Vagina (tissue), 2 donors: ENCODE measurements at regions of chr1 and their contacts with region 1.

Region 1: GRCh38 chr1:157090196-157090647 is 9.4 kb downstream of the ETV3L start:
- DNase-seq: no peak
- H3K4me3 ChIP-seq: no peak overlapping the region
- H3K27ac ChIP-seq: no peak overlapping the region
- H3K4me1 ChIP-seq: peaks cover 14% of the 10 kb centered on the region
- H3K27me3 ChIP-seq: no peaks in the 10 kb centered on the region
- CTCF ChIP-seq: peak; percentile 85 to 93 (median 87)
- POLR2A ChIP-seq: no peak

Region 2: DNA sequence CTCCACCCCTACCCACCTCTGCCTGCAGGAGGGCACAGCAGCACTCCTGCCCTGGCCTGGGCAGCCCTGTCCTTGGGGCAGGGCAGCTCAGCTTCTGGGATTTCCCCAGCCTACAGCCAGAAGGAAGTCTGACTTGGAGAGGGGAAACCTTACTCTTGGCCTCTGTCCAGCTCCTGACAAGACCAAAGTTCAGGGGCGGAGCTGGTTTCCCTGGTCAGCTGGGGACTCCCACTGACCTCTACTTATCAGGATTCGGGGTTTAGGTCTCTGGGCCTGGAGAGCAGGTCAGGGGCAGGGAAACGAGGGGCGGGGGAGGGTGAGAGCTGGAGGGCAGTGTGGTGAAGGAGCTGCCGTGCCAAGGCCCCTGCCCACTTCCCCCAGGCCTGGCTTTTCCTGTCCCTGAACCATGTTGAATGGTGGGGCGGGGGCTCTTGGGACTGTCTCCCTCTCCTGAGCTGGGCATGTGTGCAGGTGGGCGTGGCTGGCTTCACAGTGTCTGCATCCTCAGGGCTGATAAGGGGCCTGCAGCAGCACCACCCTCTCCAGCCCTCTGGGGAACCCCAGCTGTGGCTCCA is 64.8 kb after region 1 on chr1:
- intact Hi-C with region 1: loop called (anchors 2 kb)
- DNase-seq: no peak
- H3K4me3 ChIP-seq: no peak overlapping the region
- H3K27ac ChIP-seq: peak overlapping the region; percentile 28
- H3K4me1 ChIP-seq: peaks cover 26% of the 10 kb centered on the region
- H3K27me3 ChIP-seq: no peaks in the 10 kb centered on the region
- CTCF ChIP-seq: no peak
- POLR2A ChIP-seq: no peak

Region 3: DNA sequence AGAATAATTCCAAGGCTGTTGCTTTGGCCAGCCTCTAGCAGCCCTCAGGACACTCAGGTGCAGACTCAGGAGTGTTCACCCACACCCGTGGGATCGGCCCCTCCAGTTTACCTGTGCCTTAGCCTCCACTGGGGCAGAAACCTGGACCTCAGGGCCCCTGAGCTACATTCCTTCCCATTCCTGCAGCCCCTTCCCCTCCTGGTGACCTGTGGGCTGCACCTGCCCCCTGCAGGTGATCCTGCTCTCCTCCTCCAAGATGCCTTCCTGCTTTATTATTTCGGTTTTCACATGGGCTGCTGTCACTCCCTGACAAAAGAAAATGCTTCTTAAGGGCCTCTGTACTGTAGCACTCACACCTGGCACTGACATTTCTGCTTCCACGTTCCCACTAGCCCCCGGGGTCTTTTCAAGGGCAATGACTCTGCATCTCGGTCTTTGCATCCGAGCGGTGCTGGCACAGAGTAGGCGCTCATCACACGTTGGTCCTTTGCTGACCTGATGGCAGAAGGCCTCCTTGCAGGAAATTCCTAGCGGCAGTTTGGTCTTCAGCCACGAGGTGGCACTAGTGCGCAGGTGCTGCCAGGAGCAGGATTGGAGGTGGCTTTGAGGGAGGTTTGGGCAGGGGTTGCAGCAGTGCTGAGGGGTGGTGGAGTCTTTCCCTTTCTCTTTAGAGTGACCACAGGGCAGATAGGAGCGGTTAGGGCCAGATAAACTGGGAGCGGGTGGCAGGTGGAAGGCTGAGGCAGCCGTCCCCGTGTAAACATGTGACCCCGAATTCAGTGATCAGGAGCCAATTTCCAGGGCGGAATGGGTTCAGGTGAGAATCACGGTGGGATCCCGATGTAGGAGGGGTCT is 73.3 kb after region 1 on chr1:
- intact Hi-C with region 1: loop called (anchors 2 kb)
- DNase-seq: no peak
- H3K4me3 ChIP-seq: no peak overlapping the region
- H3K27ac ChIP-seq: no peak overlapping the region
- H3K4me1 ChIP-seq: no peaks in the 10 kb centered on the region
- H3K27me3 ChIP-seq: no peaks in the 10 kb centered on the region
- CTCF ChIP-seq: peak; percentile 21 to 76 (median 54)
- POLR2A ChIP-seq: no peak

Region 4: DNA sequence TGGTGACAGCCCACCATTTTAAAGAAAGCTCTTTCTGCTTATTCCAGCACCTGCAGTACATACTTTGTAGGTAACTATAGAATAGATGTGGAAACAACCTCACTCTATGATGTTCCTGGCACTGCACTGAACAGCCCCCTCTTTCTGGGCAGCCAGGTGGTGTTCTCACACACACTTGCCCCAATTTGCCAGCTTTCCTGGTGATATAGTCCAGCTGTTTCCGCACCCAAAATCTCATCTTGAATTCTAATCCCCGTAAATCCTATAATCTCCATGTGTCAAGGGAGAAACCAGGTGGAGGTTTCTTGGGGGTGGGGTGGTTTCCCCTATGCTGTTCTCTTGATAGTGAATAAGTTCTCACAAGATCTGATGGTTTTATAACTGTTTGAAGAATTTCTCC is 359.9 kb after region 1 on chr1:
- intact Hi-C with region 1: no loop called
- DNase-seq: no peak
- H3K4me3 ChIP-seq: no peak overlapping the region
- H3K27ac ChIP-seq: no peak overlapping the region
- H3K4me1 ChIP-seq: no peaks in the 10 kb centered on the region
- H3K27me3 ChIP-seq: no peaks in the 10 kb centered on the region
- CTCF ChIP-seq: no peak
- POLR2A ChIP-seq: no peak